Right ventricle myocardium inferior (tissue), 1 donor: ENCODE measurements at regions of chr13 and their contacts with region 1.

Region 1: DNA sequence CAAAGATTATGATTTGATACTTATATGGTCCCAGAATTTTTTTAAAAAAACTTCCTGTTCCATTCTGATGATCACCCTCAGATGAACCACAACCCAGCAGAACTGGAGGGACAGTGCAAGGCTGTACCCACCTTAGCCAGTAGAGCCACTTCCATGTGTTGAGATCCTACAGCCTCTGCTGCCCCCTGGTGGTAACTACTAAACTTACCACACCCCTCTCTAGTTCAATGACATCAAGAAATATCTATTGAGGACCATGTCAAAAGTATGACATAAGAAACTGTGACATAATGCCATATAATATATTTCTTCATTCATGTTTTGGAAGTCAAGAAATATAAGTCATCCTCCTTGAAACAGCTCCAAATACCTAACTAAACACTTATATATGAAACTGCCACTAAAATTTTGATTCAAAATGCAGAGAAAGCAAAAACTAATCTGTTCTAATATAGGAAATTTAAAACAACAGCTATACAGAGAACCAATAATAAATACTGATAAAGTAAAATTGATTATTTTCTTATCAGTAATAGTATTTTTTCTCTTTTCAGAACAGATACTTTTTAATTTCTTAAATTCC is 412.6 kb downstream of the KCTD12 start:
- DNase-seq: no peak
- ATAC-seq: peak; percentile 92

Region 2: DNA sequence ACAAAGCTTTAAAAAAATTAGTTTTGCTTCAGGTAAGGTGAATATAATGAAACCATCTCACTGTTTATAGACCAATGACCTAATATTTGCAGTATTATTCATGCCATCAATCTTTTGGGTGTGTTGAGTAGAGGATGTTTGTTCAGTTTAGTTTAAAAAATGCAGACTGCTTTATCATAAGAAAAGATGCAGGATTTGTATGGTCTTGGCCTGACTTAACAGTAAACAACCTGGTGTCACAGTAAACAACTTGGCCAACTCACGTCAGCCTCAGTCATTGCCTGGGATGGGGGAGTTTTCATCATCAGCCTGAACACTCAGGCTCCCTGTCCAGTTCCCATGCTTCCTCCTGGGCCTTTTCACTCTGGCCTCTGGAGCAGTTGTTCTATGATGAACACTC is 782.5 kb before region 1 on chr13:
- intact Hi-C with region 1: loop called (anchors 5 kb)
- DNase-seq: no peak
- ATAC-seq: no peak

Region 3: DNA sequence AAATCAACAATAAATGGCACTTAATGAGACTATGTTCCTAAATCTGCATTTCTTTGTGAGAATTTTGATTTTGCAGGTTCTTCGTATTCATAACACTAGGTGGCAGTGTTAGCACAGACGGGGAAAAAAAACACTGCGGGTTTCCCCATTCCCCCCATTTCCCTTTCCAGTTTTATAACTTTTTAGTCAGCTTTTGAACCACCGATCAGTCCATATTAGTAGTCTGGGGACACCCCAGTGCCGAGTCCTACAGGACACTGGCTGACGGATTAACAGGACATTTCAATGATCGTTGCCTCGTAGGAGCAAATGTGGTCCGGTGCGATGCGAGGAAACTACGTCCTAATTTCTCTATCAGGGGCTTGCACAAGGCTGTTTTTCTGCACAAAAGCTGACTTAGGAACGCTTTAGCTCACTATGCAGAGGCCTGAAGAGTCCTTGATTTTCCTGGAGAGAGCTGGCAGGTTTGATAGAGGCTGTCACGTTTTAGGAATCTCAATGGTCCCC is 603.2 kb before region 1 on chr13:
- intact Hi-C with region 1: loop called (anchors 1 kb)
- DNase-seq: no peak
- ATAC-seq: no peak

Region 4: GRCh38 chr13:75876360-75877050 is 597.1 kb before region 1 on chr13:
- intact Hi-C with region 1: loop called (anchors 1 kb)
- DNase-seq: no peak
- ATAC-seq: peak; percentile 77

Region 5: GRCh38 chr13:76223565-76223964 is 250.1 kb before region 1 on chr13:
- intact Hi-C with region 1: loop called (anchors 5 kb)
- DNase-seq: no peak
- ATAC-seq: peak; percentile 36

Region 6: DNA sequence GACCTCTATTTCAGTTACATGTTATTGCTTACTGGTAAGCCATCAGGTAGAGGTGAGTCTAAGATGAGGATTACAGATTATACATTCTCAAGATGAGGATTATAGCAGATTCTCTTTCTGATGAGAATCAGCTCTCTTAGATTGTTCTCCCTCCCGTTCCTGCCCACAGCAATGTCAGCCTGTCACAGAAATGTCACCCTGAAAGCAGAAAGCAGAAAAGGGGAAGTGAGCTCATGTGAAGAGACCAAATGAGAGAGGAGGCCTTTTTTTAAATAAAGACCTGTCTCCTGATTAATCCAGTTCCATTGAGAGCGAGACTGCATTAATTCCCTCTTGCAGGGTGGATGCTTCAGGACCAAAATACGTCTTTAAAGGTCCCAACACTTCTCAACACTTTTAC is 33.1 kb before region 1 on chr13:
- intact Hi-C with region 1: no loop called
- DNase-seq: no peak
- ATAC-seq: no peak

Region 7: GRCh38 chr13:76596216-76596615 is 122.6 kb after region 1 on chr13:
- intact Hi-C with region 1: no loop called
- DNase-seq: no peak
- ATAC-seq: no peak

Region 8: GRCh38 chr13:76903544-76904162 is 430.0 kb after region 1 on chr13:
- intact Hi-C with region 1: loop called (anchors 10 kb)
- DNase-seq: peak; percentile 72
- ATAC-seq: peak; percentile 86

Region 9: DNA sequence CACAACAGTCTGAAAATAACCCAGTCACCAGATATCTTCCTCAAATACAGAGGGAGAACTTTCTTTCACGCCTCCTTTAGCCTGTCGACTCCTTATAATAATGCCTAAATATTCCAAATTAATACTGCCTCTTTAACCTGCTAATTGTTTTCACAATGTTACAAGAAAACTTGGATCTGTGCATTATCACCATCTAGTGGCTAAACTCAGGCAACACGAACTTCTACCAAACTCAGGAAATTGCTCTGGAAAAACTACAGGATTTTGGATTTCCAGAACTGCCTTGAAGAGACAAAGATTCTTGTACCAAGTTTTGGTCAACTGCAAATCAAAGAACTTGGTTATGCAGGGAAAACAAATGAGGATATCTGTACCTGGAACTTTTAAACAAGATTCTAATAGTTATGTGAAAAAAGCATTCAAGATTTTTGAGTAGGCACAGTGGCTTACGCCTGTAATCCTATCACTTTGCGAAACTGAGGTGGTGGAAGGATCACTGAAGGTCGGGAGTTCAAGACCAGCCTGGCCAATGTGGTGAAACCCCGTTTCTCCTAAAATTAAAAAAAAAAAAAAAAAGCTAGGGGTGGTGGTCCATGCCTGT is 529.0 kb after region 1 on chr13:
- intact Hi-C with region 1: no loop called
- DNase-seq: no peak
- ATAC-seq: no peak

Region 10: DNA sequence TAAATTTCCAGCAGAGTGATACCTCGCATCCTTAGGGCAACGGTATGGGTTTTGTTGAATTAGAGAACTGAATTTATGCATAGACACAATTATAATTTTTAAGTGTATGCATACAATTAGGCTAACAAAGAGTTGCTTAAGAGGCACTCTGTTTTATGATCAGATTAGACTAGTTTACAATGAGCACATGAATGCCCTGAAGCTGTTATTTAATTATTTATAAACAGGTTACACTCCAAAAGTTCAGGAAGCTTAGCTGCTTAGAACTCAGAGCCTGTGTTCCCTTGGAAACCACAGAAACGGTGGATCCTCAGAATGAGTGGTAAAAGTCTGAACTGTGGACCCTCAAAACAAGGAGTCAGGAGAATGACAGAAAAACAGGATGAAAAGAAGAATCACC is 625.8 kb after region 1 on chr13:
- intact Hi-C with region 1: no loop called
- DNase-seq: no peak
- ATAC-seq: no peak